Breast epithelium (tissue), 4 donors: ENCODE measurements at regions of chr10 and their contacts with region 1.

Region 1: DNA sequence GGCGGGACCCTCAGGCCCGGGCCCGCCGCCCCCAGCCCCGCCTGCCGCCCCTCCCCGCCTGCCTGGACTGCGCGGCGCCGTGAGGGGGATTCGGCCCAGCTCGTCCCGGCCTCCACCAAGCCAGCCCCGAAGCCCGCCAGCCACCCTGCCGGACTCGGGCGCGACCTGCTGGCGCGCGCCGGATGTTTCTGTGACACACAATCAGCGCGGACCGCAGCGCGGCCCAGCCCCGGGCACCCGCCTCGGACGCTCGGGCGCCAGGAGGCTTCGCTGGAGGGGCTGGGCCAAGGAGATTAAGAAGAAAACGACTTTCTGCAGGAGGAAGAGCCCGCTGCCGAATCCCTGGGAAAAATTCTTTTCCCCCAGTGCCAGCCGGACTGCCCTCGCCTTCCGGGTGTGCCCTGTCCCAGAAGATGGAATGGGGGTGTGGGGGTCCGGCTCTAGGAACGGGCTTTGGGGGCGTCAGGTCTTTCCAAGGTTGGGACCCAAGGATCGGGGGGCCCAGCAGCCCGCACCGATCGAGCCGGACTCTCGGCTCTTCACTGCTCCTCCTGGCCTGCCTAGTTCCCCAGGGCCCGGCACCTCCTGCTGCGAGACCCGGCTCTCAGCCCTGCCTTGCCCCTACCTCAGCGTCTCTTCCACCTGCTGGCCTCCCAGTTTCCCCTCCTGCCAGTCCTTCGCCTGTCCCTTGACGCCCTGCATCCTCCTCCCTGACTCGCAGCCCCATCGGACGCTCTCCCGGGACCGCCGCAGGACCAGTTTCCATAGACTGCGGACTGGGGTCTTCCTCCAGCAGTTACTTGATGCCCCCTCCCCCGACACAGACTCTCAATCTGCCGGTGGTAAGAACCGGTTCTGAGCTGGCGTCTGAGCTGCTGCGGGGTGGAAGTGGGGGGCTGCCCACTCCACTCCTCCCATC is 82.7 kb downstream of the PAX2 start:
- DNase-seq: peak; percentile 21 to 57
- H3K4me3 ChIP-seq: peak overlapping the region; percentile 29 to 74 (median 50)
- H3K27ac ChIP-seq: no peak overlapping the region
- H3K4me1 ChIP-seq: peaks cover 3 to 14% of the 10 kb centered on the region in 2 donors
- H3K27me3 ChIP-seq: peaks cover 8 to 86% of the 10 kb centered on the region in 2 donors
- CTCF ChIP-seq: no peak
- POLR2A ChIP-seq: no peak

Region 2: DNA sequence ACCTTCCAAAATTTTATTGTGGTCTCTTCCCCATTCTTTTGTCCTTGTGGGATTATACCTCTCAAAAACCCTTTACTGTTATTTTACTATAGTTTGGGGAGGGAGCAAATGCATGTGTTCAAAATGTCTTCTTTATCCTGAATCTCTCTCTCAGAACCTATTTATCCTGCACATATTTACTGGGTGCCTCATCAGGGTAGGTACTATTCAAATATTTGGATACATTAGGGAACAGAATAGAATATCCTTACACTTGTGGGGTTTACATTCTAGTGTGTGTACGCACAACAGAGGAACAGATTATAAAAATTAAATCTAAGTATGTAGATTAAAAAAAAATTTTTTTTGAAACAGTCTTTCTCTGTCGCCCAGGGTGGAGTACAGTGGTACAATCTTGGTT is 432.5 kb before region 1 on chr10:
- intact Hi-C with region 1: loop called (anchors 5 kb)
- DNase-seq: no peak
- H3K4me3 ChIP-seq: no peak overlapping the region
- H3K27ac ChIP-seq: no peak overlapping the region
- H3K4me1 ChIP-seq: no peaks in the 10 kb centered on the region
- H3K27me3 ChIP-seq: no peaks in the 10 kb centered on the region
- CTCF ChIP-seq: no peak
- POLR2A ChIP-seq: no peak